ENCODE measurements at regions of chr1 and their contacts with region 1.

Region 1: DNA sequence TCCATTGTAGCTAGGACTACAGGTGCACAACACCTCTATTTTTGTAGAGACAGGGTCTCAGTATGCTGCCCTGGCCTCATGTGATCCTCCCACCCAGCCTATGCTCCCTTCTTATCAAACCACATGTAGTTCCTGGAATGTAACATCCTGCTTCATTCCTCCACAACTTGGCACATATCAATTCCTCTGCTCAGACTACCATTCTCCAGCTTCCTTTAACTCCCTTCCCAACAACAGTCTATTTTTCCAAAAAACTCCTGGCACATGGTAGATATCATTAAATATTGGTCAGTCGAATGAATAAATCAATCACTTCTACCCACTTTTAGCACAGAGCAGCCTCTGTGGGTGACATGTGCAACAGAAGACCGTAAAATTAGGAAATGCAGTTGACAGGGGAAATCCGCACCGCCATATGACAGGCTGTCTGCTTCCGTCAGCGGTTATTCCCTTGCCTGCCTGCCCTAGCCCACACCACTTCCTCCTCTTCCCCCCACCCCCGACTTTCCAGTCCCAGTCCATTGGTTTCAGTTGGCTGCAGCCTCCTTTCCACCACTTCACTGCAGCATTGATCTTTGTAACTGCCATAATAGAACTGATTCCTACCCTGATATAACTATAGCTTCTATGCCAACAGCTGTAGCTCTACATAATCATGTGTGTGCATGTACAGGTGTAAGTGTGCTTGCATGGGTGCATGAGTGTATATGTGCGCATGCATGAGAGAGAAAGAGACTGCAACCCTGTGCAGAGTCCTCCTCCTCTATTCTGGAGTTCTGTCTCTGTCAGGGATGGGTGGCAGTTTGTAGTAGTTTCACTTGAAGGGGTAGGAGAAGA is 6.8 kb upstream of the AKR1A1 start:
- DNase-seq: peak; percentile 31
- ATAC-seq: peak; percentile 67
- H3K4me3 ChIP-seq: peak overlapping the region; percentile 40 to 51 (median 42); a peak in 5 of 6 replicates
- H3K27ac ChIP-seq: peak overlapping the region; percentile 86
- H3K4me1 ChIP-seq: peaks cover 49% of the 10 kb centered on the region
- H3K27me3 ChIP-seq: no peaks in the 10 kb centered on the region
- CTCF ChIP-seq: no peak
- EP300 ChIP-seq: no peak
- POLR2A ChIP-seq: no peak
- RAD21 ChIP-seq: no peak

Region 2: DNA sequence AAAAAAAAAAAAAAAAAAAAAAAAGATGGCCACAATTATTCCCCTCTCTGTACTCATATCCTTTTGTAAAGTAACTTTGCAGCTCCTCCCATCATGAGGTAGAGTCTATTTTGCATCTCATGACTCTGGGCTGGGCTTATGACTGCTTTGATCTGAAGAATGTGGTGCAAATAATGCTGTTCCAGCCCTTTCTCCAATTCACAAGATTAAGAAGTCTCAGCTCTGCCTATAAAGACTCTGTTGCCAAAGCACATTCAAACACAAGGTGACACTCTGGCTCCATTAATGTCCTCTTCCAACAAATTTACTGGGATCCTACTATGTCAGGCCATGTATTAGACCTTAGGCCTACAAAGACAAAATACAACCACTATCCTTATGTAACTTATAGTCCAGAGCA is 635.9 kb before region 1 on chr1:
- CTCF ChIA-PET with region 1: no interaction called
- POLR2A ChIA-PET with region 1: no interaction called
- in situ Hi-C with region 1: no loop called
- intact Hi-C with region 1: no loop called
- DNase-seq: no peak
- ATAC-seq: no peak
- H3K4me3 ChIP-seq: no peak overlapping the region
- H3K27ac ChIP-seq: no peak overlapping the region
- H3K4me1 ChIP-seq: no peaks in the 10 kb centered on the region
- H3K27me3 ChIP-seq: no peaks in the 10 kb centered on the region
- CTCF ChIP-seq: peak; percentile 28
- EP300 ChIP-seq: no peak
- POLR2A ChIP-seq: no peak
- RAD21 ChIP-seq: no peak

Region 3: GRCh38 chr1:45499415-45499769 is 44.4 kb before region 1 on chr1:
- CTCF ChIA-PET with region 1: no interaction called
- POLR2A ChIA-PET with region 1: interaction called, 47 read pairs
- in situ Hi-C with region 1: no loop called
- intact Hi-C with region 1: no loop called
- DNase-seq: no peak
- ATAC-seq: no peak; the same call in 1 of the 3 replicates
- H3K4me3 ChIP-seq: peak overlapping the region; percentile 74 to 83 (median 77)
- H3K27ac ChIP-seq: peak overlapping the region; percentile 71
- H3K4me1 ChIP-seq: peaks cover 43% of the 10 kb centered on the region
- H3K27me3 ChIP-seq: no peaks in the 10 kb centered on the region; a peak in 1 of 5 replicates
- CTCF ChIP-seq: no peak
- EP300 ChIP-seq: no peak
- POLR2A ChIP-seq: no peak
- RAD21 ChIP-seq: no peak

Measured in HepG2 (cell line).